ENCODE measurements at regions of chr3 and their contacts with region 1.

Region 1: DNA sequence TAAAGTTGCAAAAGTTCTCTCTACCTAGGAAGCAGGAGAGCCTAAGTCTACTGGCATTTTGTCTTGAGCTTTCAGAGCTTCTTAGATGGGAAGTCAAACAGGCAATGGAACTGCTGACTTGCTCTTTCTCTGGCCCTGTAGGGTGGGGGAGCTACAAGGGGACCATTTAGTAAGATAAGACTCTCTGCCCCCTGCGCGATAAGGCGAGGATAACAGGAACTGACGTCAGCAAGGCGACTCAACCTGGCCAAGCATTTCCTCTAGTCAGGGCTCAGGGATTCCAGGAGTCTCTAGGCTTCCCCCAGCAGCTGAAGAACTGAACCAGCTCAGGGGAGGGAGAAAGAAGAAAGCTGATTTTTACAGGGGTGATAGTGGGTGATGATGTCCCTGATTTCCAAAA is 5.8 kb downstream of the RARB start:
- DNase-seq: peak in 4 of 5 donors; percentile 15 to 66 (median 40)
- ATAC-seq: peak; percentile 53 to 76 (median 68)
- H3K4me3 ChIP-seq: peak overlapping the region in 6 of 12 donors; percentile 8 to 76 (median 17)
- H3K27ac ChIP-seq: peak overlapping the region in 11 of 12 donors; percentile 3 to 98 (median 64)
- H3K4me1 ChIP-seq: peaks cover 0 to 60% (median 25%) of the 10 kb centered on the region in 12 donors
- H3K27me3 ChIP-seq: peaks cover 0 to 7% (median 0%) of the 10 kb centered on the region in 9 donors
- CTCF ChIP-seq: no peak
- POLR2A ChIP-seq: no peak

Region 2: DNA sequence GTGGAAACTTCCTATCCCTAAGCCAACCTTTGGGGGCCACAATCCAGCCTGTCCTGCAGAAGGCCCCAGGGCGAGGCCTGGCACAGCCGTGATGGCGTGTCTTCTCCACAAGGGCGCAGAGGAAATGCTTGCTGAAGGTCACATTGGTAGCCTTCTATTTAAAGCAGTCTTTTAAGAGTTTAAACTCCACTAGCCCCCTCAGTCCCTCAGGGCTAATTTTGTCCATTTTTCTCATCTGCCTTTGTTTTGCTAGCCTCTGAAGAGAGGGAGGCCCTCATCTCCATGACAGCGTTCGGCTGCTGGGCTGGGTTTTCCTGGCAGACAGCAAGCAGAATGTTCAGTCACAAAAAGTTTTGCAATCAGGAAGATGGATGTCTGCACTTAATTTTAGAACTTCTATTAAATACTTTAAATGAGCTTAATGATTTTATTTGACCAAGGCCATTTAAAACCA is 35.0 kb after region 1 on chr3:
- intact Hi-C with region 1: loop called in 4 of 10 experiments (anchors 5 kb)
- DNase-seq: peak; percentile 72 to 86 (median 81)
- ATAC-seq: peak; percentile 80 to 90 (median 86)
- H3K4me3 ChIP-seq: no peak overlapping the region
- H3K27ac ChIP-seq: peak overlapping the region in 8 of 12 donors; percentile 70 to 92 (median 80)
- H3K4me1 ChIP-seq: peaks cover 10 to 71% (median 51%) of the 10 kb centered on the region in 12 donors
- H3K27me3 ChIP-seq: no peaks in the 10 kb centered on the region
- CTCF ChIP-seq: peak in 11 of 12 donors; percentile 7 to 55 (median 33)
- POLR2A ChIP-seq: no peak

Region 3: DNA sequence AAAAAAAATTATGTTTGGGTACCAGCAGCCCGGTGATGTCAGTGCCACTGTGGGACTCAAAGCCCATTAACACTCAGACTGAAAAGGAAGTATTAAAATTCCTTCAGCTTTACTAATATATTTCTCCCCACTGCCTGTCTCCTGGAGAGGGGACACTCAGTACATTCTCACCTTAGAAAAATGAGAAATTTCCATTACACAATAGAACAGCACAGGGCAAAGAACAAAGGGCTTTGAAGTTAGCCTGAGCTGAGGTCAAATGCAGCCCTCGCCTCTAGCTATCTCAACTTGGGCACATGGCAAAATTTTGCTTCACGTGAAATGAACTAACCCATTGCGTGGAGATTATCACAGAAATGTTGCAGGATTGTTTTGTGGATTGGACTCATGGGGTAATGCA is 75.0 kb after region 1 on chr3:
- intact Hi-C with region 1: loop called in 1 of 10 experiments (anchors 10 kb)
- DNase-seq: no peak
- ATAC-seq: peak; percentile 30 to 74 (median 51)
- H3K4me3 ChIP-seq: no peak overlapping the region
- H3K27ac ChIP-seq: peak overlapping the region; percentile 24 to 76 (median 64)
- H3K4me1 ChIP-seq: peaks cover 0 to 68% (median 29%) of the 10 kb centered on the region in 12 donors
- H3K27me3 ChIP-seq: no peaks in the 10 kb centered on the region
- CTCF ChIP-seq: no peak
- POLR2A ChIP-seq: no peak